ENCODE measurements at regions of chr3 and their contacts with region 1.

Region 1: DNA sequence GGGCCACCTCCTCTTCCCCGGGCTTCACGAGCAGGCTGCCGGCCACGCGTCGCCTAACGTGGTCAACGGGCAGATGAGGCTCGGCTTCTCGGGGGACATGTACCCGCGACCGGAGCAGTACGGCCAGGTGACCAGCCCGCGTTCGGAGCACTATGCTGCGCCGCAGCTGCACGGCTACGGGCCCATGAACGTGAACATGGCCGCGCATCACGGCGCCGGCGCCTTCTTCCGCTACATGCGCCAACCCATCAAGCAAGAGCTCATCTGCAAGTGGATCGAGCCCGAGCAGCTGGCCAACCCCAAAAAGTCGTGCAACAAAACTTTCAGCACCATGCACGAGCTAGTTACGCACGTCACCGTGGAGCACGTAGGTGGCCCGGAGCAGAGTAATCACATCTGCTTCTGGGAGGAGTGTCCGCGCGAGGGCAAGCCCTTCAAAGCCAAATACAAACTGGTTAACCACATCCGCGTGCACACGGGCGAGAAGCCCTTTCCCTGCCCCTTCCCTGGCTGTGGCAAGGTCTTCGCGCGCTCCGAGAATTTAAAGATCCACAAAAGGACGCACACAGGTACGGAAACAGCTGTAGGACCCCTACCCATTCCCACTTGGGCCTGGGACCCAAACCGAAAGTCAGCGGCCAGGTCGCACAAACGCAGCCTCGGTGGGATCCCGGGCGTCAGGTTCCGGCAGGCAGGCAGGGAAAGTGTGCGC is 1.5 kb downstream of the ZIC1 start:
- DNase-seq: no peak
- H3K4me3 Mint-ChIP-seq: peak overlapping the region; percentile 54
- H3K27ac Mint-ChIP-seq: peak overlapping the region; percentile 40
- H3K4me1 Mint-ChIP-seq: peaks cover 25% of the 10 kb centered on the region
- H3K27me3 Mint-ChIP-seq: peaks cover 80% of the 10 kb centered on the region

Region 2: DNA sequence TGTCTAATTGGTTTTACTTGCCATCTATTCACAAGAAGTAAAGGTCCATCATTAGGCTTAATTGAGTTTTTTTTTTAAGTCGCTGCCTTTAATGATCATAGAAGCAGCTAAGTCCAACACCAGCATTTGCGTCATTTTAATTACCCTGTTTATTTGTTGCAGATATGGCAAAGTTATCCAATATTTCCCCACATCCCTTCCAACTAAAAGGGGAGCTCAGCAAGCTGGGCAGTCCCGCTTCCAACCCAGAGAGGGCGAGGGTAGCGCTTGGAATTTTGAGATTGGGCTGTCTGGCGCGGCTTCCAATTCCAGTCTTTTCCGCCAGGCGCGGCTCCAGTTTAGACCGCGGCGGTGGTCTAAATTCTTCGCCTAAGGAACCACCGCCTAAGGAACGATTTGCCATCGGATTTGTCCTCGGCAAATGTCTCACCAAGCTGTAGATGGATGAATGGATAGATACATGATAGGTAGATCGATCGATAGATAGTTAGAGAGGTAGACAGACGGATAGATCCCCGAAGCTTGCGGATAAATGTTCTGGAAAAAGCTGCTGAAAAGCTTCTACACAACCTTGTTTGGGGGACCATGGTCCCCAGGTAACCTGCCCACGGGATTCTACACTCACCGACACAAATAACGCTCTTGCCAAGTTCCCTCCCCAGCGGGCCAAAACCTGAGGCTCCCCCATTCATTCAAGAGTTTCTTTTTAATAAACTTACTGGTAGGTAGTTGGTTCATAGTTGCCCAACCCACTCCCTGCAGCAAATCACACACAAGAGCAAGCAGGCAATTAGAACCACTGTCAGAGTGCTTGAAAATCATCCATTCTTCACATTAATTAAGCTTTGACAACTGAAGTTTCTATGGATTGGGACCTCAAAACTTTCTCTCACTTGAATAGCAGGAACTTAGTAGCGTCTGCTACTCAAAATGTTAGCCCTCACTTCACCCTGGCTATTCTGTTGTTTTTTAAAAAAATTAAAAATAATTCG is 53.5 kb before region 1 on chr3:
- CTCF ChIA-PET with region 1: no interaction called
- POLR2A ChIA-PET with region 1: no interaction called
- intact Hi-C with region 1: loop called (anchors 5 kb)
- DNase-seq: no peak
- H3K4me3 Mint-ChIP-seq: no peak overlapping the region
- H3K27ac Mint-ChIP-seq: no peak overlapping the region
- H3K4me1 Mint-ChIP-seq: no peaks in the 10 kb centered on the region
- H3K27me3 Mint-ChIP-seq: peaks cover 67% of the 10 kb centered on the region

Region 3: GRCh38 chr3:147369661-147370123 is 41.0 kb before region 1 on chr3:
- CTCF ChIA-PET with region 1: no interaction called
- POLR2A ChIA-PET with region 1: no interaction called
- intact Hi-C with region 1: loop called (anchors 5 kb)
- DNase-seq: no peak
- H3K4me3 Mint-ChIP-seq: no peak overlapping the region
- H3K27ac Mint-ChIP-seq: no peak overlapping the region
- H3K4me1 Mint-ChIP-seq: no peaks in the 10 kb centered on the region
- H3K27me3 Mint-ChIP-seq: peaks cover 59% of the 10 kb centered on the region

Region 4: DNA sequence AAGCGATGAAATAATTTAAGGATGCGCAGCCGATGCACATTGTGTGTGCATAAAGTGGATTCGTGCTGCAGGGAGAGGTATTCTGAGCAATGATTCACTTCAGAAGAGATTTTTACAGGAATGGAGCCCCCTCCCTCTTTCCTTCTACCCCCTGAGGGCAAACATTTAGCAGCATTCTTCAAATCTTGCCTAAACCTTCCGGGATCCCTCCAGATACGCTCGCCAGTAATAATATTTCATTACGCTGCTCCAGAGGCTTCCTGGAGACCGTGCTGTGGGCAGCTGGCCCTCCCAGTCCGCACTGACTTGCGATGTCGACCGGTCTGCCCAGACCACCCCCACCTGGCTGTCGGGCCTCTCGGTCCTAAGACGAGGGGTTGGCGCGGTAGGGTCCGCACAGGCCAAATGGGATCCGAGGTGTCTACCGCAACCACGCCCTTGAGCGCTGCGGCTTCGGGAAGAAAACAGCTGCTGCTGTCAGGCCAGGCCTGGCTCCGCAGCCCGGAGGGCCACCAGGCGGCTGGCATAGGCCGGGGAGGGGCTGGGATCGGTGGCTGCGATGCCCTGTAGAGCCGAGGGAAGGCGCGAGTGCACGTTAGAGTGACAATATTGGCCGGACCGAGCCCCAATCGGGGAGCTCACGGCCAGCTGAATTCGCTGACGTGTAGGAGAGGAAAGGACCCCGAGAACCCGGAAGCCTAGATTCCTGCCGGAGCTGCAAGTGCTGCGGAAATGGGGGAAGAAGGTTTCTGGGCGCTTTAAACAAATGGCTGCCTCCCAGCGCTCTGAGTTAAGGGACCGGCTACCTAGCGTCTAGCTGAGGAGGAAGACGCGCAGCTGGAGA is 18.7 kb before region 1 on chr3:
- CTCF ChIA-PET with region 1: no interaction called
- POLR2A ChIA-PET with region 1: no interaction called
- intact Hi-C with region 1: loop called (anchors 2 kb)
- DNase-seq: no peak
- H3K4me3 Mint-ChIP-seq: no peak overlapping the region
- H3K27ac Mint-ChIP-seq: no peak overlapping the region
- H3K4me1 Mint-ChIP-seq: peaks cover 3% of the 10 kb centered on the region
- H3K27me3 Mint-ChIP-seq: peaks cover 74% of the 10 kb centered on the region

Region 5: DNA sequence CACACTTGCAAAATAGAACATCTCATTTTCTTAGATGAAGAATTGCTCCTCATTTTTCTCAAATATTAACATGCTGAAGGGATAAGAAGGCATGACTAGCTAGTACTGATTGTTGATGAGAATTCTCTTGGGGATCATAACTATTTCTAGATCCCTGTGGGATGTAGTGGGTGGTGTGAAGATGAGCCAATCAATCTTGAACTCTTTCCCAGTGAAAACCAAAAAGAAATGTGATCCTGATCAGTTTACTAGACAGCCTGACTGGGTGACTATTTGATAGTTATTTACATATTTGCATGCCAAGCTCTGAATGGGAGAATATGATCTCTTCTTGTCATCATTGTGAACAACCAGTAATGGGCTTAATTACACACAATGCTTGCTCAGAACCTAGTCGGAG is 62.2 kb after region 1 on chr3:
- CTCF ChIA-PET with region 1: no interaction called
- POLR2A ChIA-PET with region 1: no interaction called
- intact Hi-C with region 1: no loop called
- DNase-seq: no peak
- H3K4me3 Mint-ChIP-seq: no peak overlapping the region
- H3K27ac Mint-ChIP-seq: no peak overlapping the region
- H3K4me1 Mint-ChIP-seq: no peaks in the 10 kb centered on the region
- H3K27me3 Mint-ChIP-seq: no peaks in the 10 kb centered on the region

Region 6: GRCh38 chr3:147915057-147915456 is 504.4 kb after region 1 on chr3:
- CTCF ChIA-PET with region 1: no interaction called
- POLR2A ChIA-PET with region 1: no interaction called
- intact Hi-C with region 1: no loop called
- DNase-seq: no peak
- H3K4me3 Mint-ChIP-seq: no peak overlapping the region
- H3K27ac Mint-ChIP-seq: no peak overlapping the region
- H3K4me1 Mint-ChIP-seq: no peaks in the 10 kb centered on the region
- H3K27me3 Mint-ChIP-seq: no peaks in the 10 kb centered on the region